ENCODE measurements at regions of chr17 and their contacts with region 1.

Region 1: DNA sequence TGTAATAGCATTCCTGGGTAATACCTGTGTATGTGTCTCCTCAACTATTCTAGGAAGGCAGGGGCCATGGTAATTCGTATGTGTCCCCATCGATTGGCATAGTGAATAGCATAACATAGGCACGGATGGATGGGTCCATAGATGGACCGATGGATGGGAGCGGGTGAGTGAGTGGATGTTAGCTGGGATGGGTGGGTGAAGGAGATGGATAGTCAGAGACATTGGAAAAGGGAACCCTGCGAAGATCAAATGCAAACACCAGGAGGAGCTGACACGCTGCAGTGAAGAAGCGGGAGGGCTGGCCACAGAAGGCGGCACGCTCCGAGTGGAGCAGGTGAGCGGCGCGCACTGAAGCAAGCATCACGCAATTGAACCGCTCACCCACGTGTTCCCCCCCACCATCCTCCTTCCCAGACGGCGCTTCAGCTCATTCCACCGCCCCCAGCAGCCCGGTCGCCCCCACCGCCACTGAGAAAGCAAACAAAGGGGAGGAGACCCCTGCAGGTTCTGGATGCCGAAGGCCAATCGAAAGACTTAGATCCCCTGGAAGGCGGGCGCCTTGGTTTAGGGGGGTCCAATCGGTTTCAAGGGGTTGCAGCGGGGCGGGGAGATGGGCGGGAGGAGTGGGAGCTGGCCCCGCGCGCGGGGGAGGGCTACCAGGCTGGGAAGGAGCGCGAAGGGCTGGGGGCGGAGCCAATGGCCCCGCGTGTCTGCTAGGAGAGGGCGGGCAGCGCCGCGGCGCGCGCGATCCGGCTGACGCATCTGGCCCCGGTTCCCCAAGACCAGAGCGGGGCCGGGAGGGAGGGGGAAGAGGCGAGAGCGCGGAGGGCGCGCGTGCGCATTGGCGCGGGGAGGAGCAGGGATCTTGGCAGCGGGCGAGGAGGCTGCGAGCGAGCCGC is at the start of gene ARRB2:
- DNase-seq: peak; percentile 96
- ATAC-seq: peak; percentile 88
- H3K4me3 ChIP-seq: peak within 1 kb of the TSS; percentile 65 to 73
- H3K27ac ChIP-seq: peak within 1 kb of the TSS; percentile 64
- H3K4me1 ChIP-seq: peaks cover 13 to 45% of the 10 kb centered on the region in 2 experiments; a peak in 3 of 4 replicates
- H3K27me3 ChIP-seq: no peaks in the 10 kb centered on the region
- CTCF ChIP-seq: peak; percentile 45 to 70 (median 59)
- POLR2A ChIP-seq: no peak
- RAD21 ChIP-seq: peak; percentile 83
- total RNA-seq, gene ARRB2: 70.8 TPM

Region 2: DNA sequence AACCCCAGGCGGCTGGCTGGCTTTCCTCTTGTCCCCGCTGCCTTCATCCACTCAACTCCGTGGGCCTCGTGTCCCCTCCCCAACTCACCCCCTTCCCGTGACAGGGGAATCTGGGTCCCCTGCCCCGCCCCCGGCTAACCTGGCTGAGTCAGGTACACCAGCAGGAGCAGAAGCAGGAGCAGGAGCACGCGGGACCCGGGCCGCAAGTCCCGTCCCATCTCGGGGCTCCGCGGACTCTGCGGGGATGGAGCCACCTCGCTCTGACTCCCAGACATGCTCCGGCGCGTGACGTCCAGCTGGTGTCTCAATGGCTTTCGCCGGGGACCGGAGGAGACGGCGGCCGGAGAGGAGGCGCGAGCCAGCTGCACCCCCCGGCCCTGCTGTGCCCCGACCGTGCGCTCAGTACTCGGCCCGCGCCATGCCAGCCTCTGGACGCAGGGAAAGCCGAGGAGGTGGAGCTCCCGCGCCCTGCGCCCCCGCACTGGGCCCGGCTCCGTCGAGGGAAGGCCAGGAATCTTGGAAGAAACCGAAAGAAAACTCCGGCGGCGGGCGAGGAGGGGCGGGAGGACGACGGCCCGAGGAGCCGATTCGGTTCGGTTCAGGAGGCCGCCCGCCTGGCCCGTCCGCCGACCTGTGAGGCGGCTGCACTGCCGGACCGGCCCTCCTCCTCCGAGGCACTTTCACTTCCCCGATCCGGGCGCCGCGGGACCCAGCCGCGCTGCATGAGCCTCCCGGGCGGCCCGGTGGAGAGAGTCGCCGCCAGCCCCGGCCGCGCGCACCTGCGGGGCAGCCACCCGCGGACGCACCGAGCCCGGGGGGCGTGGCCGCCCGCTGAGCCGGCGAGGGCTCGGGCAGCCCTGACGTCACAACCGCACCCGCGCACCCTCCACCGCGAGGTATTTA is 29.3 kb after region 1 on chr17 and contains the starts of genes CXCL16 and ZMYND15:
- CTCF ChIA-PET with region 1: no interaction called
- POLR2A ChIA-PET with region 1: no interaction called
- RAD21 ChIA-PET with region 1: no interaction called
- intact Hi-C with region 1: no loop called
- DNase-seq: no peak
- ATAC-seq: peak; percentile 76
- H3K4me3 ChIP-seq: peak within 1 kb of the TSS; percentile 68 to 73
- H3K27ac ChIP-seq: peak within 1 kb of the TSS; percentile 52
- H3K4me1 ChIP-seq: peaks cover 11 to 25% of the 10 kb centered on the region in 2 experiments
- H3K27me3 ChIP-seq: no peaks in the 10 kb centered on the region
- CTCF ChIP-seq: no peak
- POLR2A ChIP-seq: peak; percentile 12
- RAD21 ChIP-seq: no peak
- total RNA-seq, gene CXCL16: 44.8 TPM
- total RNA-seq, gene ZMYND15: 2.8 TPM

Region 3: GRCh38 chr17:4881761-4882555 is 171.9 kb after region 1 on chr17:
- CTCF ChIA-PET with region 1: interaction called, 4 read pairs
- POLR2A ChIA-PET with region 1: no interaction called
- RAD21 ChIA-PET with region 1: no interaction called
- intact Hi-C with region 1: loop called (anchors 1 kb)
- DNase-seq: no peak
- ATAC-seq: peak; percentile 98
- H3K4me3 ChIP-seq: no peak overlapping the region
- H3K27ac ChIP-seq: no peak overlapping the region
- H3K4me1 ChIP-seq: no peaks in the 10 kb centered on the region
- H3K27me3 ChIP-seq: no peaks in the 10 kb centered on the region
- CTCF ChIP-seq: peak; percentile 89 to 97 (median 90)
- POLR2A ChIP-seq: no peak
- RAD21 ChIP-seq: peak; percentile 89

Region 4: GRCh38 chr17:4891411-4892342 is 181.6 kb after region 1 on chr17:
- CTCF ChIA-PET with region 1: interaction called, 3 read pairs
- POLR2A ChIA-PET with region 1: no interaction called
- RAD21 ChIA-PET with region 1: no interaction called
- intact Hi-C with region 1: loop called (anchors 1 kb)
- DNase-seq: no peak
- ATAC-seq: no peak
- H3K4me3 ChIP-seq: no peak overlapping the region
- H3K27ac ChIP-seq: no peak overlapping the region
- H3K4me1 ChIP-seq: no peaks in the 10 kb centered on the region
- H3K27me3 ChIP-seq: no peaks in the 10 kb centered on the region
- CTCF ChIP-seq: no peak
- POLR2A ChIP-seq: no peak
- RAD21 ChIP-seq: no peak